Adrenal gland (tissue), 19 donors: ENCODE measurements at regions of chr6 and their contacts with region 1.

Region 1: GRCh38 chr6:83884523-83884922 is 25.0 kb downstream of the CYB5R4 start:
- DNase-seq: no peak
- H3K4me3 ChIP-seq: no peak overlapping the region
- H3K27ac ChIP-seq: no peak overlapping the region
- H3K4me1 ChIP-seq: peaks cover 0 to 14% of the 10 kb centered on the region in 2 donors
- H3K27me3 ChIP-seq: no peaks in the 10 kb centered on the region
- CTCF ChIP-seq: peak; percentile 46 to 87 (median 73)
- POLR2A ChIP-seq: no peak

Region 2: DNA sequence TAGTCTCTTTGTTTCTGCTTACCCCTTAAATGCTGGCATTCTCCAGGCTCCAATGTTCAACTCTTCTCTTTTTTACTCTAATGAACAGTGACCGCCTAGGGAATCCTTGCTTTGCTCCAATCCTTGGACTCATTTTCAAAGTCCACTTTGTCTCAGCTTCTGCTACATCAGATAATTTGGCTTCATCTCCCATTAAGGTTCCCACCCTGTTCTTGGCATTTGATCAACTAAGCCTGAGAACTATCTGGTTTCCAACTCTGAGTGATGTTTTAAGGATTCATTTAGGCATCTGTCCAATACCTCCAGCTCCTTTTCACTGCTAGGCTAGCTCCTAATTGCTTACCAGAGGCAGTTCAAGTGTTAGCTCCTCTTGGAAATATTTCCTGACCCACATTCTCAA is 518.6 kb before region 1 on chr6:
- intact Hi-C with region 1: no loop called
- DNase-seq: no peak
- H3K4me3 ChIP-seq: no peak overlapping the region
- H3K27ac ChIP-seq: no peak overlapping the region
- H3K4me1 ChIP-seq: peaks cover 4 to 18% of the 10 kb centered on the region in 2 donors
- H3K27me3 ChIP-seq: no peaks in the 10 kb centered on the region
- CTCF ChIP-seq: no peak
- POLR2A ChIP-seq: no peak

Region 3: GRCh38 chr6:84220809-84221409 is 336.4 kb after region 1 on chr6:
- intact Hi-C with region 1: loop called (anchors 5 to 10 kb)
- DNase-seq: no peak
- H3K4me3 ChIP-seq: no peak overlapping the region
- H3K27ac ChIP-seq: no peak overlapping the region
- H3K4me1 ChIP-seq: no peaks in the 10 kb centered on the region
- H3K27me3 ChIP-seq: no peaks in the 10 kb centered on the region
- CTCF ChIP-seq: peak; percentile 32 to 67 (median 56)
- POLR2A ChIP-seq: no peak

Region 4: DNA sequence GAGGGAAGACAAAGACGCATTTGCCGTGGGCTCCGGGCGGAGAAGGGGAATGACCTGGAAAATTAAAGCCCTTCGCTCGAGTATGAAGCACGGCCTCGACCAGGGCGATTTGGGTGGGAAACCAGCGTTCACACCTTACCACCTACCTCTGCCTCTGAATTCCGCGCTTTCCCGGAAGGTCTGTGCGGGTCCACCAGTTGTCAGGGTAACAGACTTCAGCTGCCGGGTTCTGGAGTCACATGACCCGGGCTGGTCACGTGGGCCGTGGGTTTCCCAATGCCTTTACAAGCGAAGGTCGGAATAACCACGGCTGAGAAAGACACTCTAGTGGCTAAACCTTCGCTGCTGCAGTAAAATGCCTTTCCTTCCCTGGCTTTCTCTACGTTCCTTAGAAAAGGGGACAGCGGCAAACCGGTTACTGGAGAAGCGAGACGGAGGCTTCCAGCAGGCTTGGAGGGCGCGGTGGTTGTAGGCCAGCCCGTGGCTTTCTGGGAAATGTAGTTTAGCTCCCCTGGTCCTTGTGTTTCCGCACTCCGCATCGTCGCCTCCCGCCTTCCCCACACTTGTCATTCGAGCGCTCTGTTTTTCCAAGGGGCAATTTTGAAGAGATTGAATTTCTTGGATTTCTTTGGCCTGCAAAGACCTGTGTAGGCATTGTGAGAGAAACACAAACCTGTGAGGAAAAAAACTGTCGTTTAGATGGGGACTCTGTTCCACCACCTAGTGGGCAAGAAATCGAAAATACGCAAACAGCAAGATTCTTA is 343.1 kb after region 1 on chr6 and contains the start of gene CEP162:
- intact Hi-C with region 1: loop called (anchors 5 to 10 kb)
- DNase-seq: peak; percentile 87 to 97 (median 92)
- H3K4me3 ChIP-seq: peak within 1 kb of the TSS; percentile 57 to 97 (median 82)
- H3K27ac ChIP-seq: peak within 1 kb of the TSS; percentile 66 to 95 (median 83)
- H3K4me1 ChIP-seq: peaks cover 0 to 7% of the 10 kb centered on the region in 2 donors
- H3K27me3 ChIP-seq: no peaks in the 10 kb centered on the region
- CTCF ChIP-seq: peak; percentile 37 to 92 (median 73)
- POLR2A ChIP-seq: no peak
- total RNA-seq, gene CEP162: 3.2 to 10.6 (median 5.7) TPM

Region 5: DNA sequence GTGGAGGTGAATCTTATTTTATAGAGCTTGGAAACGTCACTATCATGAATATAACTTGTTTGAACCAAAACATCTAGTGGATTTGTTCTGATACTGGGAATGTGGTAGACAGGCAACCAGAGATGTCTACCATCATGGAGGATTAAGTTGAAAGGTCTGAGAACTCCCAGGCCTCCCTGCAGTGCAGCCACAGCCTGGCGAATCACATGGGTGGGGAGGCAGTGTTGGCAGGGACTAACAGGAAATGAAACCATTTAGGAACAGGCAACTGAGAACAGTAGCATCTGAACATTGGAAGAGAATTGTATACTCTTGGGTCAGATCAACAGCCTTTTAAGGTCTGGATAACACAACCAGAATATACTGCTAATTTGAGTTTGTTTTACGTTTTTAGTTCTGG is 365.2 kb after region 1 on chr6:
- intact Hi-C with region 1: no loop called
- DNase-seq: no peak
- H3K4me3 ChIP-seq: no peak overlapping the region
- H3K27ac ChIP-seq: no peak overlapping the region
- H3K4me1 ChIP-seq: no peaks in the 10 kb centered on the region
- H3K27me3 ChIP-seq: no peaks in the 10 kb centered on the region
- CTCF ChIP-seq: no peak
- POLR2A ChIP-seq: no peak